ENCODE measurements at regions of chrX and their contacts with region 1.

Region 1: DNA sequence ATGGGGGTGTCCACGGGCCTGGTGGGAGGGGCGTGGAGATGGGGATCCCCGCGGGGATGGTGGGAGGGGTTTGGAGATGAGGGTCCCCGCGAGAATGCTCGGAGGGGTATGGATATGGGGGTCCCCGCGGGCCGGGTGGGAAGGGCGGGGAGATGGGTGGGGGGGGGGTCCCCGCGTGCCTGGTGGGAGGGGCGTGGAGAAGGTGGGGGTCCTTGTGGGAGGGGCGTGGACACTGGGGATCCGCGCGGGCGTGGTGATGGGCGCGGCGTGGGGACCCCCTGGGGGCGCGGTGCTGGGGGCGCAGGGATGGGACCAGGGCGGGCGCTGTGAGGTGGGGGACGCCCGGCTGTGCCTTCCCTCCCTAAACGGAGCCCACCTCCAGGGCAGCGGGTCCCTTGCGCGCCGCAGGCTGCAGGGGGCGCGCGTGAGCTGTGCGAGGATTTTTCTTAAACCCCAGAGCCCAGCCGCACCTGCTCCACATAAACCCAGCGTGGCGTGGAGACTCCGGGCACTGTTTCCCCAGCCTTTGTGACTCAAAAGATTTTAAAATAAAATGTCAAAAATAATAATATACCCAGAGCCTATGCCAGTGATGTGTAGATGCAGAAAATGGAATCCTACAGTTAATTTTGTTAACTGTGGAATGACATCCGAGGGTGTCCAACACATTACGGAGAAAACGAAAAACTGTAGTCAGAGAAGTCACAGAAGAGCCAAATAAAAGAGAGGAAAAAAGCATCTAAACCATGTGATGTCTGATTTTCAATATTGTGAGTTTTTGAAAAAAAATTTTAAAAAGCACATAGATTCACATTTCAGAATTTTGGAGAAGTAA is 1.5 kb upstream of the ASMTL start:
- DNase-seq: peak; percentile 83 to 97 (median 92)
- ATAC-seq: peak; percentile 45
- H3K4me3 ChIP-seq: peak overlapping the region; percentile 59
- H3K4me3 Mint-ChIP-seq: peak overlapping the region; percentile 85
- H3K27ac ChIP-seq: peak overlapping the region in 1 of 2 donors; percentile 94
- H3K27ac Mint-ChIP-seq: peak overlapping the region; percentile 72
- H3K4me1 ChIP-seq: peaks cover 47% of the 10 kb centered on the region
- H3K4me1 Mint-ChIP-seq: peaks cover 22% of the 10 kb centered on the region
- H3K27me3 ChIP-seq: no peaks in the 10 kb centered on the region
- H3K27me3 Mint-ChIP-seq: no peaks in the 10 kb centered on the region
- CTCF ChIP-seq: peak; percentile 98

Region 2: GRCh38 chrX:1246816-1247215 is 207.4 kb before region 1 on chrX:
- CTCF ChIA-PET with region 1: no interaction called
- POLR2A ChIA-PET with region 1: no interaction called
- intact Hi-C with region 1: loop called in 1 of 2 experiments (anchors 2 kb)
- DNase-seq: peak; percentile 59 to 90 (median 80)
- ATAC-seq: peak; percentile 74
- H3K4me3 ChIP-seq: no peak overlapping the region
- H3K4me3 Mint-ChIP-seq: peak overlapping the region; percentile 62
- H3K27ac ChIP-seq: no peak overlapping the region
- H3K27ac Mint-ChIP-seq: peak overlapping the region; percentile 15
- H3K4me1 ChIP-seq: peaks cover 49% of the 10 kb centered on the region
- H3K4me1 Mint-ChIP-seq: peaks cover 37% of the 10 kb centered on the region
- H3K27me3 ChIP-seq: no peaks in the 10 kb centered on the region
- H3K27me3 Mint-ChIP-seq: no peaks in the 10 kb centered on the region
- CTCF ChIP-seq: peak; percentile 81

Region 3: GRCh38 chrX:1300449-1300848 is 153.7 kb before region 1 on chrX:
- CTCF ChIA-PET with region 1: no interaction called
- POLR2A ChIA-PET with region 1: no interaction called
- intact Hi-C with region 1: no loop called
- DNase-seq: no peak
- ATAC-seq: no peak
- H3K4me3 ChIP-seq: no peak overlapping the region
- H3K4me3 Mint-ChIP-seq: no peak overlapping the region
- H3K27ac ChIP-seq: no peak overlapping the region
- H3K27ac Mint-ChIP-seq: no peak overlapping the region
- H3K4me1 ChIP-seq: no peaks in the 10 kb centered on the region
- H3K4me1 Mint-ChIP-seq: no peaks in the 10 kb centered on the region
- H3K27me3 ChIP-seq: no peaks in the 10 kb centered on the region
- H3K27me3 Mint-ChIP-seq: peaks cover 12% of the 10 kb centered on the region
- CTCF ChIP-seq: no peak

Region 4: DNA sequence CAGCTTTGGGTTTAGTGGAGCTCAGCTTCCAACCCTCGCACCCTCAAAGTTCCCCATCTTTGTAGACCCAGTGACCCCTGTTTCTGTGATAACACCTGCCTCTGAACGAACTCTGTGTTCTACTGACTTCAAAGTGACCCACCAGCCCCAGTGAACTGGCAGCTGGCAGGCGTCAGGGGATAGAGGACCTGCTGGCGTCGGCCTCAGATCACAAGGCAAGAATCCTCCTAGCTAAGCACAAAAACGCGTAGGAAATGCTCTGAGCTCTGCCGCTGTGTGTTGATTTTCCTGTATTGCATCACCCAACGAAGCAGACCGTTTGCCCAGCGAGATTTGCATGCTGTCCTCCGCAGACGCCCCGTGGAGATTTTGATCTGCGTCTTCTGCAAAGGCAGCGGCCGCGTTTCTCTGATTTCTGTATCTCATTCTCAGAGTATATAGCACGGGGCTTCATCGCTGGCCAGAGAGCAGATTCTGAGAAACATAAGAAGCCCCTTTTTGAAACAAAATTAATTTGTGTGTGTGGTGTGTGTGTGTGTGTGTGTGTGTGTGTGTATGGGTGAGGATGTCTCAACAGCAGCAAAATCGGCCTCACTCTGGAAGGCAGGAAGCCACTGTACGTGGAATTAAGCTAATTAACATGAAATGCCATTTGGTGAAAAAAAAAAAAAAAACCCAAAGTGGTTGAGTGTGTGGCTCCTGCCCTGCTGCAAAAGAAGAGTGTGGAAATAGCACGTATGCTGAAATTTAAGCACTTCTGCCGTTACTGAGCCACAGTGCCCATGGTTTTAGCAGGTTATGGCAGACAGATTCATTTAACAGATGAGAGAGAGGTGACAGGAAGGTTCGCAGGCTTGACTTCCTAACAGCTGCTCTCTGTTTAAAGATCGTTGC is 27.7 kb after region 1 on chrX:
- CTCF ChIA-PET with region 1: no interaction called
- POLR2A ChIA-PET with region 1: no interaction called
- intact Hi-C with region 1: loop called in 1 of 2 experiments (anchors 2 kb)
- DNase-seq: peak; percentile 49 to 92 (median 70)
- ATAC-seq: peak; percentile 84
- H3K4me3 ChIP-seq: peak overlapping the region; percentile 27
- H3K4me3 Mint-ChIP-seq: peak overlapping the region; percentile 73
- H3K27ac ChIP-seq: peak overlapping the region; percentile 59 to 76
- H3K27ac Mint-ChIP-seq: peak overlapping the region; percentile 95
- H3K4me1 ChIP-seq: peaks cover 58% of the 10 kb centered on the region
- H3K4me1 Mint-ChIP-seq: peaks cover 64% of the 10 kb centered on the region
- H3K27me3 ChIP-seq: no peaks in the 10 kb centered on the region
- H3K27me3 Mint-ChIP-seq: no peaks in the 10 kb centered on the region
- CTCF ChIP-seq: no peak

Region 5: GRCh38 chrX:1521459-1521956 is 67.3 kb after region 1 on chrX:
- CTCF ChIA-PET with region 1: no interaction called
- POLR2A ChIA-PET with region 1: no interaction called
- intact Hi-C with region 1: no loop called
- DNase-seq: peak in 13 of 14 experiments; percentile 35 to 90 (median 54)
- ATAC-seq: peak; percentile 68
- H3K4me3 ChIP-seq: peak overlapping the region; percentile 1
- H3K4me3 Mint-ChIP-seq: peak overlapping the region; percentile 84
- H3K27ac ChIP-seq: peak overlapping the region; percentile 32 to 33
- H3K27ac Mint-ChIP-seq: peak overlapping the region; percentile 83
- H3K4me1 ChIP-seq: peaks cover 54% of the 10 kb centered on the region
- H3K4me1 Mint-ChIP-seq: peaks cover 57% of the 10 kb centered on the region
- H3K27me3 ChIP-seq: no peaks in the 10 kb centered on the region
- H3K27me3 Mint-ChIP-seq: no peaks in the 10 kb centered on the region
- CTCF ChIP-seq: no peak

Region 6: GRCh38 chrX:1580735-1581531 is 126.8 kb after region 1 on chrX:
- CTCF ChIA-PET with region 1: no interaction called
- POLR2A ChIA-PET with region 1: no interaction called
- intact Hi-C with region 1: loop called (anchors 1 kb)
- DNase-seq: peak; percentile 44 to 86 (median 65)
- ATAC-seq: peak; percentile 83
- H3K4me3 ChIP-seq: no peak overlapping the region
- H3K4me3 Mint-ChIP-seq: peak overlapping the region; percentile 66
- H3K27ac ChIP-seq: no peak overlapping the region
- H3K27ac Mint-ChIP-seq: peak overlapping the region; percentile 74
- H3K4me1 ChIP-seq: peaks cover 55% of the 10 kb centered on the region
- H3K4me1 Mint-ChIP-seq: peaks cover 19% of the 10 kb centered on the region
- H3K27me3 ChIP-seq: no peaks in the 10 kb centered on the region
- H3K27me3 Mint-ChIP-seq: no peaks in the 10 kb centered on the region
- CTCF ChIP-seq: peak; percentile 72

Region 7: GRCh38 chrX:1609311-1610161 is 155.4 kb after region 1 on chrX:
- CTCF ChIA-PET with region 1: no interaction called
- POLR2A ChIA-PET with region 1: no interaction called
- intact Hi-C with region 1: no loop called
- DNase-seq: no peak
- ATAC-seq: no peak
- H3K4me3 ChIP-seq: no peak overlapping the region
- H3K4me3 Mint-ChIP-seq: no peak overlapping the region
- H3K27ac ChIP-seq: no peak overlapping the region
- H3K27ac Mint-ChIP-seq: no peak overlapping the region
- H3K4me1 ChIP-seq: no peaks in the 10 kb centered on the region
- H3K4me1 Mint-ChIP-seq: no peaks in the 10 kb centered on the region
- H3K27me3 ChIP-seq: no peaks in the 10 kb centered on the region
- H3K27me3 Mint-ChIP-seq: no peaks in the 10 kb centered on the region
- CTCF ChIP-seq: no peak

Region 8: GRCh38 chrX:1649621-1650020 is 195.5 kb after region 1 on chrX:
- CTCF ChIA-PET with region 1: no interaction called
- POLR2A ChIA-PET with region 1: no interaction called
- intact Hi-C with region 1: loop called in 1 of 2 experiments (anchors 1 kb)
- DNase-seq: no peak
- ATAC-seq: no peak
- H3K4me3 ChIP-seq: no peak overlapping the region
- H3K4me3 Mint-ChIP-seq: no peak overlapping the region
- H3K27ac ChIP-seq: no peak overlapping the region
- H3K27ac Mint-ChIP-seq: no peak overlapping the region
- H3K4me1 ChIP-seq: peaks cover 9% of the 10 kb centered on the region
- H3K4me1 Mint-ChIP-seq: peaks cover 4% of the 10 kb centered on the region
- H3K27me3 ChIP-seq: peaks cover 0 to 3% of the 10 kb centered on the region in 2 experiments
- H3K27me3 Mint-ChIP-seq: peaks cover 5% of the 10 kb centered on the region
- CTCF ChIP-seq: no peak

Region 9: DNA sequence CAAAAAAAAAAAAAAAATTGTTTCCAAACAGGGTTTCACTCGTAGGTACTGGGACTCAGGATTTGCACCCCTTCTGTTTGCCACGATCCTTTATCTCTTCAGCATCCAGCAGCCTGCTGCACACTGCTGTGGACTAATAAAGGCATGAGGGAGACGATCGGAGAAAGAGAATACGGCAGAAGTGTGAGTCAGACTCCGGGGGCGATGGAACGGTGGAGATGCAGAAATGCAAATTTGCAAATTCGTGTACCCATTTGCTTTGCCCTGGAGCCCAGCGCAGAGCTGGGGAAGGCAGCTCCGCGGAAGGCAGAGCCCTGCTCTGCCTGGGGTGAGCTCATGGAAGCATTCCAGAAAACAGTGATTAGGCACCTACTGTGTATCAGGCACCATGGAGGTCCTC is 430.9 kb after region 1 on chrX:
- CTCF ChIA-PET with region 1: no interaction called
- POLR2A ChIA-PET with region 1: no interaction called
- intact Hi-C with region 1: no loop called
- DNase-seq: no peak
- ATAC-seq: no peak
- H3K4me3 ChIP-seq: no peak overlapping the region
- H3K4me3 Mint-ChIP-seq: no peak overlapping the region
- H3K27ac ChIP-seq: no peak overlapping the region
- H3K27ac Mint-ChIP-seq: no peak overlapping the region
- H3K4me1 ChIP-seq: no peaks in the 10 kb centered on the region
- H3K4me1 Mint-ChIP-seq: no peaks in the 10 kb centered on the region
- H3K27me3 ChIP-seq: no peaks in the 10 kb centered on the region
- H3K27me3 Mint-ChIP-seq: peaks cover 15% of the 10 kb centered on the region
- CTCF ChIP-seq: no peak

Region 10: GRCh38 chrX:2595258-2595657 is 1141.1 kb after region 1 on chrX:
- CTCF ChIA-PET with region 1: no interaction called
- POLR2A ChIA-PET with region 1: no interaction called
- intact Hi-C with region 1: loop called in 1 of 2 experiments (anchors 2 kb)
- DNase-seq: no peak
- ATAC-seq: no peak
- H3K4me3 ChIP-seq: no peak overlapping the region
- H3K4me3 Mint-ChIP-seq: no peak overlapping the region
- H3K27ac ChIP-seq: no peak overlapping the region
- H3K27ac Mint-ChIP-seq: no peak overlapping the region
- H3K4me1 ChIP-seq: peaks cover 8% of the 10 kb centered on the region
- H3K4me1 Mint-ChIP-seq: peaks cover 12% of the 10 kb centered on the region
- H3K27me3 ChIP-seq: no peaks in the 10 kb centered on the region
- H3K27me3 Mint-ChIP-seq: no peaks in the 10 kb centered on the region
- CTCF ChIP-seq: no peak

Region 11: DNA sequence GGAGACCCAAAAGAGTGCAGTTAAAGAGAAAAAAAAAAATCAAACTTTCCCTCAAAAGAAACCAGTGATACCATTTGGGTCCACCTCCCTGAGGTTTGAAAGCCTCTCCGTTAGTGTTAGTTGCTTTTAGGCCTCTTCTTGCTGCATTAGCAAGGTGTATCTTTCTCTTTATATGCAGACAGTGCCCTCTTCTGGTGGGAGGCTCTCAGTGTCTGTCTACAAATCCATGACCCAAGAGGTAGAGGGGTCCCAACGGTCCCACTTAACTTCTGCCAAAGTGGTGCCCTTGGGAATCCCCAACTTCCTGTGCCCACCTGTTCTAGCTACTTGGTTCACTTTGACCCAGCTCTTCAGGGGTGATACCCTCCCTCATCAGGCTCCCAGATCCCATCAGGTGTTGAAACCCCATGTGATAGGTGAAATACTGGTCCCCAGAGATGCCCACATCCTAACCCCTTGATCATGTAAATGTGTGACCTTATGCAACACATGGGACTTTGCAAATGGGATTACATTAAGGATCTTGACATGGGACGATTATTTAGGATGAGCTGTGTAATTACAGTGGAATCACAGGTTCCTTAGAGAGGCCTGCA is 1173.2 kb after region 1 on chrX:
- CTCF ChIA-PET with region 1: no interaction called
- POLR2A ChIA-PET with region 1: no interaction called
- intact Hi-C with region 1: loop called (anchors 2 to 5 kb)
- DNase-seq: peak in 9 of 14 experiments; percentile 22 to 69 (median 44)
- ATAC-seq: no peak
- H3K4me3 ChIP-seq: no peak overlapping the region
- H3K4me3 Mint-ChIP-seq: no peak overlapping the region
- H3K27ac ChIP-seq: no peak overlapping the region
- H3K27ac Mint-ChIP-seq: peak overlapping the region; percentile 54
- H3K4me1 ChIP-seq: peaks cover 8% of the 10 kb centered on the region
- H3K4me1 Mint-ChIP-seq: peaks cover 38% of the 10 kb centered on the region
- H3K27me3 ChIP-seq: no peaks in the 10 kb centered on the region
- H3K27me3 Mint-ChIP-seq: no peaks in the 10 kb centered on the region
- CTCF ChIP-seq: peak; percentile 46